Heart left ventricle (tissue), 16 donors: ENCODE measurements at regions of chr6 and their contacts with region 1.

Region 1: GRCh38 chr6:44074439-44075136 is 52.7 kb downstream of the MRPL14 start:
- DNase-seq: peak; percentile 64 to 86 (median 78)
- ATAC-seq: peak; percentile 54 to 75 (median 65)
- H3K4me3 ChIP-seq: peak overlapping the region in 8 of 12 donors; percentile 20 to 61 (median 54)
- H3K27ac ChIP-seq: peak overlapping the region in 11 of 12 donors; percentile 61 to 91 (median 85)
- H3K4me1 ChIP-seq: peaks cover 12 to 58% (median 38%) of the 10 kb centered on the region in 12 donors
- H3K27me3 ChIP-seq: peaks cover 0 to 10% (median 0%) of the 10 kb centered on the region in 9 donors
- CTCF ChIP-seq: peak; percentile 82 to 96 (median 90)
- POLR2A ChIP-seq: no peak

Region 2: GRCh38 chr6:43667245-43668150 is 407.1 kb before region 1 on chr6:
- intact Hi-C with region 1: loop called (anchors 1 to 5 kb)
- DNase-seq: peak; percentile 75 to 89 (median 81)
- ATAC-seq: peak; percentile 39 to 71 (median 52)
- H3K4me3 ChIP-seq: peak overlapping the region in 2 of 12 donors; percentile 13 to 24
- H3K27ac ChIP-seq: peak overlapping the region; percentile 11 to 87 (median 69)
- H3K4me1 ChIP-seq: peaks cover 11 to 47% (median 37%) of the 10 kb centered on the region in 12 donors
- H3K27me3 ChIP-seq: no peaks in the 10 kb centered on the region
- CTCF ChIP-seq: peak; percentile 89 to 98 (median 94)
- POLR2A ChIP-seq: no peak

Region 3: DNA sequence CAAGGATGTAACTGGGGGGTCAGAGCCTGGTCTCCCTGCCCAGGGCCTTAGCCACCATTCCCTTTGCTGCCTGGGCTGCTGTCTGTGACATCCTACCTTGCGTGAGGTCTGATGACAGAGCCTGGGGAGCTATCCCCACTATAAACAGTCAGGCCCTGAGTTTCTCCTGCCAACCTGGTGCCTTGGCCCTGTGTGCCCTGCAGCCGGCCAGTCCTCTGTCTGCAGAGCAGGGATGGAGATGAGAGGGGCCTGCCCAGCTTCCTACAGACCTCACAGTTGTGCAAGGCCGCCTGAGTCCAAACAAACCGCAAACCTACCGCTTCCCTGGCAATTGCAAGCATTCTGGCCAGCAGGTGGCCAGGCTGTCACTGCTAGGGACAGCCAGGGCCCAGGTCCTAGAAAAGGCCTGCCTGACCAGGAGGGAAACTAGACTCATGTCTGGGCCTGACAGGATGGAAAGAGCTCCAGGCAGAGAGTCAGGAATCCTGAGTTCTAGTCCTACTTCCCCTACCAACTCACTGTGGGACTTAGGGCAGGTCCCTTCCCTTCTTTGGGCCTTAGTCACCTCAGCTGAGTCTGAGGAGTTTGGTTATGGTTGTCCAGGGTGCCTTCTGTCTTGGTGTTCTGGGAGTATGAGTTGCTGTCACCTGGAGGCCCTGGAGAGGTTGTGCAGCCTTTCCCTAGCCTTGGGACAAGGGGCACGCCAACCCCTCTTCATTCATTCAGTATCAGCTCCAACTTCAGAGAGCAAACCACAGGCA is 218.4 kb before region 1 on chr6:
- intact Hi-C with region 1: loop called in 5 of 10 experiments (anchors 10 kb)
- DNase-seq: peak in 2 of 5 donors; percentile 46 to 53
- ATAC-seq: peak; percentile 14 to 79 (median 59)
- H3K4me3 ChIP-seq: no peak overlapping the region
- H3K27ac ChIP-seq: no peak overlapping the region
- H3K4me1 ChIP-seq: no peaks in the 10 kb centered on the region
- H3K27me3 ChIP-seq: no peaks in the 10 kb centered on the region
- CTCF ChIP-seq: peak in 10 of 12 donors; percentile 21 to 55 (median 38)
- POLR2A ChIP-seq: no peak

Region 4: DNA sequence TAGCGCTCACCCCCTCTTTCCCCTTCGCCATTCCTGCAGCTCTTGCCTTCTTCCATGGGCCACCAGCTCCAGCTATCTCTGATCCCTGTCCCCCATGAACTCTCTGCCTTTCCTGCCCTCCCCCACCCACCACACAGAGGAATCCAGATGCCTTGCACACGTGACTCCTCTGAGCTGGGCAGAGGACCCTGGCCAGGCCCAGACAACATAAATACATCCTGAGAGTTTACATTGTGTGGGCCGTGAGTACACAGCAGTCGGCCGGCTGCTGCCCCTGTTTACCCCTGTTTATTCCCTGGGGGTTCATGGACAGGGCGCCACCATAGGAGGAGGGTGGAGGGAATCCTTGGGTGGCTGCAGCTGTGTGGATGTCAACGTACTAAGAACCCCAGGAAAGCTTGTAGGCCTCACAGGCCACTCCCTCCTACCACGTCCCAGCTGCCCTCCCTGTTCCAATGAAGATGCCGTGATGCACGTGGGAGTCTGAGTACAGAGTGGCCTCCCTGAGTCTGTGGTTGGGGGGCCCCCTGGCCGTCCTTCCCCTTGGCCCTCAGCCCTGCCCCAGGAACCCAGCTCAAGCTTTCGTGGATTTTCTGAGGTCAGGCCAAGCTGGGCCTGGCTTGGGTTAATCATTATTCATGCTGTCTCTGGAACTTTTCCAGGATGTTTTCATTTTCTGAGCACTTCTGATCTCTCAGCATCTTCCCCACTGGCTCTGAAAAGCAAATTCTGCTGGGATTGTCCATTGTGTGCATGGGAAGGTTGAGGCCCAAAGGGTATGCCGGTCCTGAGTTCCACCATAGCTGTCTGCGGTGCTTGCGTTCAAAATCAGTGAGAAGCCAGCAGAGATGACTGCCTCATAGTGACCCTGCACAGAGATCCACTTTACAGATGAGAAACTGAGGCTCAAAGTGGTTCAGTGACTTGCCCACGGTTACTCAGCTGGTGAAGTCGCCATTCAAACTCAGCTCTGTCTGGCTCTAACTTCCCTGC is 83.7 kb before region 1 on chr6:
- intact Hi-C with region 1: loop called in 1 of 10 experiments (anchors 5 kb)
- DNase-seq: peak in 1 of 5 donors; percentile 61
- ATAC-seq: peak in 2 of 4 donors; percentile 14 to 19
- H3K4me3 ChIP-seq: no peak overlapping the region
- H3K27ac ChIP-seq: peak overlapping the region; percentile 73 to 98 (median 86)
- H3K4me1 ChIP-seq: peaks cover 0 to 55% (median 20%) of the 10 kb centered on the region in 12 donors
- H3K27me3 ChIP-seq: no peaks in the 10 kb centered on the region
- CTCF ChIP-seq: no peak
- POLR2A ChIP-seq: no peak

Region 5: GRCh38 chr6:44010411-44011349 is 63.9 kb before region 1 on chr6:
- intact Hi-C with region 1: loop called in 4 of 10 experiments (anchors 2 to 5 kb)
- DNase-seq: peak; percentile 52 to 86 (median 79)
- ATAC-seq: peak; percentile 61 to 91 (median 89)
- H3K4me3 ChIP-seq: no peak overlapping the region
- H3K27ac ChIP-seq: peak overlapping the region in 10 of 12 donors; percentile 53 to 92 (median 79)
- H3K4me1 ChIP-seq: peaks cover 0 to 46% (median 15%) of the 10 kb centered on the region in 12 donors
- H3K27me3 ChIP-seq: no peaks in the 10 kb centered on the region
- CTCF ChIP-seq: no peak
- POLR2A ChIP-seq: no peak

Region 6: GRCh38 chr6:44342489-44342888 is 267.9 kb after region 1 on chr6 and contains the start of gene SPATS1:
- intact Hi-C with region 1: no loop called
- DNase-seq: peak; percentile 16 to 72 (median 31)
- ATAC-seq: peak; percentile 34 to 68 (median 48)
- H3K4me3 ChIP-seq: peak within 1 kb of the TSS; percentile 8 to 53 (median 36)
- H3K27ac ChIP-seq: peak within 1 kb of the TSS in 1 of 12 donors; percentile 42
- H3K4me1 ChIP-seq: peaks cover 0 to 12% (median 5%) of the 10 kb centered on the region in 12 donors
- H3K27me3 ChIP-seq: peaks cover 0 to 21% (median 0%) of the 10 kb centered on the region in 9 donors
- CTCF ChIP-seq: no peak
- POLR2A ChIP-seq: no peak
- total RNA-seq, gene SPATS1: not detected